Right ventricle myocardium inferior (tissue), 1 donor: ENCODE measurements at regions of chr19 and their contacts with region 1.

Region 1: DNA sequence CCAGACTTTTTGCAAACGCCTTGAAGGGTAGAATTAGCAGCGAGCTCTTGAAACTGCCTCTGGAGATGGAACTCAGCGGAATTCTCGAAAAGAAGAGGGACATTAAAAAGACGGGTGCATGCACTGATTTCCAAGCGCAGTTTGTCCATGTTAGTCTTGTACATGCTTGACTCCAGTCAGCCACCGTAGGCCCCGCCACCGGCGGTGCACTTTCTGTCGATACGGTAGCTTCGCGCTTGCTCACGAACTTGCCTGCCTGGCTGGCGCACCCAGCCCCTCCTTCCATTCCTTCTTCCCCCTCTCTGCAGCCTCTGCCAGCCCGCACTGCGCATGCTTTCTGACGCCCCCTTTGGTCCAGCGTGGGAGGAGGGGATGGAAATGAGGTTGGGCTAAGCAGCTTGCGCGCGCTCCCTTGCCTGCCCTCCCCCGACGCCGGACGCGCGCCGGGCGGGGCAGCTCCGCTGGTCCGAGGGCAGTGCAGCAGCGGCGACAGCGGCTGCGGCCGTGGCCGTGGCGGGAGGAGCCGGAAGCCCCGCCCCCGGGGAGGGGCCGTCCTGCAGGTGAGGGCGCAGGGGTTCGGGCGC is at the start of gene ZNF575:
- DNase-seq: peak; percentile 94
- ATAC-seq: peak; percentile 80
- total RNA-seq, gene ZNF575: 1.8 TPM

Region 2: DNA sequence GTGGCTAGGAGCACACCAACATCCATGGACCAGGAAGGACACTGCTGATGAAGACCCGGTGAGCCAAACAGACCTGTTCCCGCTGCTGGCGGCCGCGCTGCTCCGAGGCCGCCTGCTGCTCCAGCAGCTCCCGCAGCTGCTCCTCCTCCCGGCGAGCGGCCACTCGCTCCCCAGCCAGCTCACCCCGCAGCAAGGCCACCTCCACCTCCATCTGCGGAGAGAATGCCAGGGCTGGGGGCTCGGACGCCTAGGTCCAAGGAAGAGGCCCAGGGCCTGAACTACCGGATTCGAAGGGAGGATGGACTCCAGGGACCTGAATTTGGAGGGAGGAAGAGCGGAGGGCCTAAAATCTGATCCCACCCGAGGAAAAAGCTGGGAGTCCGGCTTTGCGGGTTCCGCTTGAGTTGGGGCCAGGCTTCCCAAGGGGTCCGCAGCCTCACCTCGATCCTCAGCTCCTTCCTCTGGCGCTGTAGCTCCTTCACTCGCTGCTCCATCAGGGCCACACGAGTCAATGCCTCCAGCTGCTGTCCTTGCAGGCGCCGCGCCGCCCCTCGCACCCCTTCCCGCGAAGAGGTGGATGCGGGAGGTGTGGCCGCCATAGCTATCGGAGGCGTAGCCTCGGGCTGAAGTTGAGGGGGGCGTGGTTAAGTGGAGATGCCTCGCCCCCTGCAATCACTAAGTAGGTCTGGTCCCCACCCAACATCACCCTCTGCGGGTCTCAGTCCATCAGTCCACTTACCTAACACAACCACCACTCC is 31.2 kb before region 1 on chr19:
- intact Hi-C with region 1: no loop called
- DNase-seq: no peak
- ATAC-seq: no peak

Region 3: GRCh38 chr19:43584484-43584883 is 51.4 kb after region 1 on chr19:
- intact Hi-C with region 1: no loop called
- DNase-seq: no peak
- ATAC-seq: no peak

Region 4: DNA sequence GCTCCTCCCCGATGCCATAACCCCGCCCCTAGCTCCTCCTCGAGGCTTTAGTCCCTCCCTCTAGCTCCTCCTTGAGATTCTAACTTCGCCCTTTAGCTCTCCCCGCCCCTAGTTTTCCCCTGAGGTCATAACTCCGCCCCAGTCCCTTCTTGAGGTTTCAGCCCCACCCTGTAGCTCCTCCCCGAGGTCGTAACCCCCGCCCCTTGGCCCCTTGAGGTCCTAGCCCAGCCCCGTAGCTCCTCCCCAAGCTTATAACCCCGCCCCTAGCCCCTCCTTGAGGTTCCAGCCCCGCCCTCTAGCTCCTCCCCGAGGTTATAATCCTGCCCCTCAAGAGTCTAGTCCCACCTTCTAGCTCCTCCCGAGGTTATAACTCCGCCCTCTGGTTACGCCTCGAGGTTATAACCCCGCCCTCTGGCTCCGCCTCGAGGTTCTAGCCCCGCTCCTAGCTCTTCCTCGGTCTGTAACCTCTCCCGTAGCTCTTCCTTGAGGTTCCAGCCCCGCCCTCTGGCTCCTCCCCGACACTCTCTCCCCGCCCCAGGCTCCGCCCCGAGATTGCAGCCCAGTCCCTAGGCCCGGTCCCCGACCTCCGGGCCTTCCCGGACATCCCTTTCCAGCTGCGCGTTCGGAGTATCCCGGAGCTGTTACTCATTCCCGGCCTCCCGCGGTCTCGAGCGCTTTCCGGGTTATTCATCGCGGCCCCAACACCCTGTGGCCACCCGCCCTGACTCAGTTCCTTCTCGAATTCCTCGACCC is 135.5 kb after region 1 on chr19:
- intact Hi-C with region 1: loop called (anchors 5 kb)
- DNase-seq: peak; percentile 99
- ATAC-seq: peak; percentile 94

Region 5: GRCh38 chr19:43774103-43774939 is 241.3 kb after region 1 on chr19:
- intact Hi-C with region 1: loop called (anchors 10 kb)
- DNase-seq: peak; percentile 81
- ATAC-seq: peak; percentile 87